H1 (cell line): ENCODE measurements at regions of chr11 and their contacts with region 1.

Region 1: DNA sequence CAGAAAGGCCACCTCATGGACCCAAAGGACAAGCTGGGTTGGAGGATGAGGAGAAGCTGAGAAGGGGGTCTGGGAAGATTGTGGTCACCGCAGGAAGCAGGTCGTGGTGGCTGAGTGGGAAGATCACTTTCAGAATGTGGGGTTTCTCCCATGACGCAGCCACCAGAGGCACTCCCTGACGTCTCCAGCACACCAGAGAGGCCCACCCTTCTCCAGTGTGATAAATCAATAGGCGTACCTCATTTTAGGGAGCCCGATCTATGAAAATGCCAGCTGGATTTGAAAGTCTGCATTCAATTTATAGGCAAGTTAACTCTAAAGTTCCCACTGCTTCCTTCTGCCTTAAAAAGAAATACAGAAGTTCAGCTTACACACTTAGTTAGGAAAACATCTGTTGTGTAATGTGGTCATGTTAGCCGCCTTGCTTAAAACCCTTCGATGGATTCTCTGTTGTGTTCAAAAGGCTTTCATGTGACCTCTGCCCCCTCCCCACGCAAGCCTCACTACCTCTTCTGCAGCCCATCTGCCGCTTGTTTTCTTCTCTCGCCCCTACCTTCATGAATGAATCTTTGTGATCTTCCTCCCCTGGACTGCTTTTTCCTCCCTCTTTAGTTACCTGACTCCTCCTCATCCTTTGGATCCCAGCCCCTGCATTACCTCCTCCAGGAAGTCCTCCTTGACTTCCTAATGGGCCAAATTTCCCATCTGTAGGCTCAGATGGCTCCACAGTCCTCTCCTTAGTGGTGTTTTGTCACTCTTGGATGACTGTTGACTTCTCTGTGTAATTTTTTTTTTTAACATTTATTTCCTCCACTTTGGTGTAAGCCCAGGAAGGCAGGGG is 10.7 kb downstream of the TSPAN18 start:
- DNase-seq: no peak
- H3K4me3 ChIP-seq: no peak overlapping the region
- H3K27ac ChIP-seq: no peak overlapping the region
- H3K4me1 ChIP-seq: peaks cover 11 to 35% (median 25%) of the 10 kb centered on the region in 4 experiments
- H3K27me3 ChIP-seq: peaks cover 0 to 22% (median 9%) of the 10 kb centered on the region in 4 experiments; a peak in 5 of 7 replicates
- CTCF ChIP-seq: no peak
- EP300 ChIP-seq: no peak
- POLR2A ChIP-seq: no peak
- RAD21 ChIP-seq: no peak

Region 2: DNA sequence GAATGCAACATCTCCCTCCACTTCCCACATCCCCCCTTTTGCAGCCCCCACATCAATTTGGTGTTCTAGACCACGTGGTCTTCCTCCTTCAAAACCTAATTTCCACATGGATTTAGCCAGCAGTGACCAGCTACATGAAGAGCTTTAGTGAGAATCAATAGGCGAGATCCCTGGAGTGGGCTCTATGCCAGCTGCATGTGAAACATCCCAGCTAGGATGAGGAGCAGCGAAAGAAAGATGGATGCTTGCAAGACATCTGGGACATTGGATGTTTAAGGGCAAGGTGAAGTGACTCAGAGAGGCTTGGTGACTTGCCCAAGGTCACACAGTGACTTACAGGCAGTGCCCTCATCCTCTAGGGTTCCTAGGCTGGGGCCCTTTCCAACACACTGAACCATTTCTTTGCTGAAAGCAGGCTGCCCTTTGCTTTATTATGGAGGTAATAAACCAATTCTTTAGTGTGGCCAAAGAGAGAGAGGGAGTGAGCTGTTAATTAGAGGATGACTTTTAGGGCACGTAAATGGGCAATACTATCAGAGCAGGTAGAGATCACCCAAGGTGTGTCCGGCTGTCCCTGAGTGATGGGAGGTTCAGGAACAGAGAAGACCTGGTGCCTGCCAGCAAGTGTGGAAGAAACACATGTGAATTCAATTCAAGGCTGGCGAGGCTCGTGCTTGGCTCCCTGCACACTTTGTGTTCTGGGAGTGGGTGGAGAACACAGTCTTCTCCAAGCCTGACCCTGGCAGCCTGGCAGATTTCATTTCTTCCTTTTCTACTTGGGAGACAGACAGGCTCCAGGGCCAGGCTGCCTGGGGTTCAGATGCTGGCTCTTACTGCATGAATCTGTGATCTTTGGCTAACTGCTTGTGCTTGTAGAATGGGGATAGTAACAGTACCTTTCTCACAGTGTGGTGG is 13.3 kb after region 1 on chr11:
- CTCF ChIA-PET with region 1: interaction called, 12 read pairs
- POLR2A ChIA-PET with region 1: interaction called, 7 read pairs
- DNase-seq: peak in 1 of 2 experiments; percentile 42
- H3K4me3 ChIP-seq: no peak overlapping the region
- H3K27ac ChIP-seq: no peak overlapping the region
- H3K4me1 ChIP-seq: peaks cover 14 to 26% (median 22%) of the 10 kb centered on the region in 4 experiments
- H3K27me3 ChIP-seq: peaks cover 4 to 23% (median 20%) of the 10 kb centered on the region in 4 experiments
- CTCF ChIP-seq: no peak
- EP300 ChIP-seq: no peak
- POLR2A ChIP-seq: no peak
- RAD21 ChIP-seq: no peak

Region 3: DNA sequence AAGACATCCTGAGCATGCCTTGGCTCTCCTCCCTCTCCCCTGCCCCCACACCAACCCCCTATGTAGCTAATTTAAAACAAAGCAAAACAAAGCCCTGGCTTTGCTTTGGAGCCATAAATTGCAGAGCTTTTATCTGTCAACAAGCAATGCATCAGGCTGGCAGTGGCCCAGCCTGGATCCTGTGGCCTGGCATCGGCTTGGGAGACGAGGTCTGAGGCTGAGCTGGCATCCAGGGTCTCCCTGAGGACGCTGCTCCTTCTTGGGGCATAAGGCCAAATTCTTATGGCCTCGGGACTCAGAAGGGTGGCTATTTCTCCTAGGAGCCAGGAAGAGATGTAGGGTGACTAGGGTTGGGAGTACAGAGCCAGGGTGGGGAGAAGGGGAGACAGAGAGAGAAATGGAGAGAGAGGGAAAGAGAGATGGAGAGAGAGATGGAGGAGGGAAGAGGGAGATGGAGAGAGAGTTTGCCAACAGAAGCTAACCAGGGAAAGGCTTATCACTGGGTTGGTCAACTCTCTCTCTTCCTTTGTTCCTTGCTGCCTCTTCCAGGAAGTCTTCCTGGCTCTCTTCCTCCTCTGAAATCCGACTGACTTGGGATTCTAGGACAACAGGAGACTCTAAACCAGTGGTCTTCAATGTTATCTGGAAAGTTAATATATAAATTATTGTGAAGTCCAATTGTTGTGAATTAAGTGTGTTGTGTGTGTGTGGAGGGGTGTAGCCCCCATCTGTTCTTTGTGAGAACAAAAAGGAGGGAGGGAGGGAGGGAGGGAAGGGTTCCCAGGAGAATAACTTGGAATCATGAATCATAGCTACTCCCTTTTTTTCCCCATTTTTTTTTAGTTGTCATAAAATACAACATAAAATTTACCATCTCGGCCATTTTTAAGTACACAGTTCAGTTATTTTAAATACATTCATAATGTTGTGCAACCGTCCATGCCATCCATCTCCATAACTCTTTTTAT is 18.4 kb after region 1 on chr11:
- CTCF ChIA-PET with region 1: interaction called, 12 read pairs
- POLR2A ChIA-PET with region 1: interaction called, 7 read pairs
- DNase-seq: no peak
- H3K4me3 ChIP-seq: peak overlapping the region in 1 of 4 experiments; percentile 16; a peak in 1 of 8 replicates
- H3K27ac ChIP-seq: no peak overlapping the region
- H3K4me1 ChIP-seq: peaks cover 16 to 37% (median 22%) of the 10 kb centered on the region in 4 experiments
- H3K27me3 ChIP-seq: peaks cover 4 to 30% (median 25%) of the 10 kb centered on the region in 4 experiments
- CTCF ChIP-seq: no peak
- EP300 ChIP-seq: no peak
- POLR2A ChIP-seq: no peak
- RAD21 ChIP-seq: no peak

Region 4: DNA sequence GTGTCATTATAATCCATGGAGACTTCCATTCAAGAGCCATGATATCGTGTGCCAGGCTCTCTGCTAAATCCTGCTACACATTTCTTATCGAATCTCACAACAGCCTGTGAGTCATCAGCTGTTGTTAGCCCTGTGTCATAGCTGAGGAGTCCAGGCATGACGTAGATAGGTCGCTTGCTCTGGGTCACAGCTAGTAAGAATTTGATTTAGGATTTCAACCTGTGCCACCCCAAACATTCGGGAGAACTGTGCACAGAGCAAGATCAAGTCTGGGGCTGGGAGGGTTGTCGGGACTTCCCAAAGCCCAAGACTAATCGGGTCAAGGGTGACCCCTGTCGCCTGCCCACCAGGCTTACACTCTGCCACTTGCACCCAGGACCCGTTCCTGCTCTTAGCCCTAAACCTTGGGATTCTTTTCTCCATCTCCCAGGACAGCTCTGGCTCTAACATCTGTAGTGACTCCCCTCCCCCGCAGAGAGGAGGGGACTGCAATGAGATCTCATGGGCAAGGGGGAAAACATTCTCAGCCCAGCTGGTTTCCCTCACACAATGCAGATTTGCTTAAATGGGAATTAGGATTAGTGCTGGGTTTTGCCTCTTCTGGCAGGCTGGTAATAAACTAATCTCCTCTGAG is 23.6 kb after region 1 on chr11:
- CTCF ChIA-PET with region 1: interaction called, 12 read pairs
- POLR2A ChIA-PET with region 1: interaction called, 6 read pairs
- DNase-seq: peak; percentile 61 to 68
- H3K4me3 ChIP-seq: no peak overlapping the region
- H3K27ac ChIP-seq: no peak overlapping the region
- H3K4me1 ChIP-seq: peaks cover 9 to 22% (median 14%) of the 10 kb centered on the region in 4 experiments
- H3K27me3 ChIP-seq: peaks cover 0 to 9% (median 6%) of the 10 kb centered on the region in 4 experiments; a peak in 5 of 7 replicates
- CTCF ChIP-seq: peak; percentile 75 to 86 (median 85)
- EP300 ChIP-seq: no peak
- POLR2A ChIP-seq: no peak
- RAD21 ChIP-seq: peak; percentile 88 to 90